IMR-90 (cell line): ENCODE measurements at regions of chr2 and their contacts with region 1.

Region 1: DNA sequence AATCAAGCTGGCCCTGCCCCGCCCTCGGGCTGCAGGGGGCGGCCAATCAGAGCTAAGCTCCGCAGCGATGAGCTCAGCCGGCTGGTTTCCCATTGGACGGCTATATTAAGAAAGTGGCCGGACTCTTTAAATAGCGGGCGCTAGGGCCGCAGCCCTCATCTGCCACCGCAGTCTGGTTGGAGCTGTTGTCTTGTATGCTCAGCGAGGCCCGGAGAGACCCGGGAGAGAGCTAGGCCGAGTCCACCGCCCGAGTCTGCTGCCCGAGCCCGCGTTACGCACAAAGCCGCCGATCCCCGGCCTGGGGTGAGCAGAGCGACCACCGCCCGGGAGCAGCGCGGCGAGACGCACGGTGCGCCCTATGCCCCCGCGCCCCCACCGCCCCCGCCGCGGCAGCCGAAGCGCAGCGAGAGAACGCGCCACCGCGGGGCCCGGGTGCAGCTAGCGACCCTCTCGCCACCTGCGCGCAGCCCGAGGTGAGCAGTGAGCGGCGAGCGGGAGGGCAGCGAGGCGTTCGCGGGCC is at the start of gene RHOB:
- DNase-seq: peak; percentile 98
- ATAC-seq: peak; percentile 88
- H3K4me3 ChIP-seq: peak within 1 kb of the TSS; percentile 86
- H3K27ac ChIP-seq: peak within 1 kb of the TSS; percentile 88
- H3K4me1 ChIP-seq: peaks cover 14% of the 10 kb centered on the region
- H3K27me3 ChIP-seq: no peaks in the 10 kb centered on the region
- CTCF ChIP-seq: no peak
- POLR2A ChIP-seq: peak; percentile 100
- RAD21 ChIP-seq: no peak
- total RNA-seq, gene RHOB: 112 and 151 TPM in 2 replicates

Region 2: DNA sequence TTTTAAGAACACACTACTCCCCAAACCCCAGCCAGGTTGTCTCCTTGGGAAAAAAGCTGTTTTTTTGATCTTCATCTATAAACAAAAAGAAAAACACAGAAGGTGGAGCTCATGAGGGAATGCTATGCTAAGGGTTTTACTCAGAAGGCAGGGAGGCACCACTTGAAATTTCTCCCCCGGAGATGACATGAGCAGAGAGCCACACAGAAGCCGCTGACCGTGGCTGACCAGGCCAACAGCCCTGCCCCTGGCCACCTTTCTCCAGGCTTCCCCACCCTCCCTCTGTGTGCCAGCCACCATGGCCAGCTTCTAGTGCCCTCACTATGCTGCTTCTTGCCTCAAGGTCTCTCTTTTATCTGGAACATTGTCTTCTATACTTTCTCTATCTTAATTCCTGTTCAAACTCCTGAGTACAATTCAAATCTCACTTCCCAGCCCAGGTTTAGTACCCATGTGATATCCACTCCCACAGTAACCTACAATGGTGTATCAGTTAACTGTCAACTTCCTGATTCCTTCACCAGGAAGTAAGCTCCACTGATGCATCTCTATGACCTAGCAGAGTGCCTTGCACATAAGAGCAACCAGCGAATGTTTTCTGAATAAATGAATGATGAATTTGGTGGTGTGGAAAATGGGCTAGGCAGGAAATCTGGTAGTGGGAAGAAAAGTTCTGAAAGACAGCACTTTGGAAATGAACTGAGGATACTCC is 410.9 kb before region 1 on chr2:
- CTCF ChIA-PET with region 1: no interaction called
- POLR2A ChIA-PET with region 1: no interaction called
- dilution Hi-C with region 1: no loop called
- in situ Hi-C with region 1: no loop called
- intact Hi-C with region 1: no loop called
- DNase-seq: no peak
- ATAC-seq: no peak
- H3K4me3 ChIP-seq: no peak overlapping the region
- H3K27ac ChIP-seq: no peak overlapping the region
- H3K4me1 ChIP-seq: 0 out of 2 replicates have a peak, but pooled peaks cover 1% of the 10 kb centered on the region
- H3K27me3 ChIP-seq: no peaks in the 10 kb centered on the region
- CTCF ChIP-seq: no peak
- POLR2A ChIP-seq: no peak
- RAD21 ChIP-seq: no peak

Region 3: DNA sequence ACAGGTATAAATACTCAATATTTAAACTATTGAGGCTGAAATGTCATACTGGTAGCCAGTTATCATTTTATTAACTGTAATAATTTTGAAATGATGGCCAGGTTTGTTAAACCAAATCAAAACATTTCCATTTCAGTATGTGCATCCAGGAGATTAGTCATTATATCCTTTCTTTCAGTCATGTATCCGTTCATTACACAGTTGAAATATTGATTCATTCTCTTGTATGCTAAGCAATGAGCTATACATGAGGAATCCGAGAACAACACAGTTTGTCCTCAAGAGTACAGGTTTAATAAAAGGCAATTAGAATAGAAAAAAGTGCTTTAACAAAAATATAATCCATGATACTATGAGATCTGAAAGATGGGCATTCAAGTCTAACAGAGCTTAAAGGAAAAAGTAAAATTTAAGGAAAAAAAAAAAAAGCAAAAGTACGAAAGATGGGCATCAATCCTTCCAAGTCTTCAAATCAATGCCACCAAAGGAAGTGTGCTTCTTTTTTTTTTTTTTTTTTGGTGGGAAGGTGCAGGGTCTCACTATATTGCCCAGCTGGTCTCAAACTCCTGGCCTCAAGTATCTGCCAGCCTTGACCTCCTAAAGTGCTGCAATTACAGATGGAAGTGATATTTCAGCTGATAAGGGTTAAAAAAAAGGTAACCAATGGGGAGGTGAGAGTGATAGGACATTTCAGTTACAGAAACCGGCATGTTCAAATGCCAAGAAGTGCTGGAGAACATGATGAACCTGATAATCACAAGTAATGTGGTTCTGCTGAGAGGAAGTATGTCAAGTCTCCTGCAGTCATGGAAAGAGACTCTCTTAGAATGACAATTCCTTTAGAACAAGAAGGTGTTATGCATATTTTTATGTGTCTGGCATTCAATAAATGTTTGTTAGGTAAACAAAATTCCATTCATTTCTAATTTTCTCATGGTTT is 132.1 kb before region 1 on chr2:
- CTCF ChIA-PET with region 1: interaction called, 5 read pairs
- POLR2A ChIA-PET with region 1: interaction called, 10 read pairs
- dilution Hi-C with region 1: no loop called
- in situ Hi-C with region 1: no loop called
- intact Hi-C with region 1: no loop called
- DNase-seq: peak; percentile 51
- ATAC-seq: no peak
- H3K4me3 ChIP-seq: no peak overlapping the region
- H3K27ac ChIP-seq: no peak overlapping the region
- H3K4me1 ChIP-seq: peaks cover 2% of the 10 kb centered on the region; the same call in 1 of the 2 replicates
- H3K27me3 ChIP-seq: no peaks in the 10 kb centered on the region
- CTCF ChIP-seq: no peak
- POLR2A ChIP-seq: no peak
- RAD21 ChIP-seq: no peak

Region 4: GRCh38 chr2:20333738-20334137 is 113.2 kb before region 1 on chr2:
- CTCF ChIA-PET with region 1: no interaction called
- POLR2A ChIA-PET with region 1: no interaction called
- dilution Hi-C with region 1: no loop called
- in situ Hi-C with region 1: no loop called
- intact Hi-C with region 1: no loop called
- DNase-seq: no peak
- ATAC-seq: no peak
- H3K4me3 ChIP-seq: no peak overlapping the region
- H3K27ac ChIP-seq: no peak overlapping the region
- H3K4me1 ChIP-seq: peaks cover 2% of the 10 kb centered on the region; the same call in 1 of the 2 replicates
- H3K27me3 ChIP-seq: no peaks in the 10 kb centered on the region
- CTCF ChIP-seq: no peak
- POLR2A ChIP-seq: no peak
- RAD21 ChIP-seq: no peak

Region 5: GRCh38 chr2:20411361-20411894 is 35.5 kb before region 1 on chr2:
- CTCF ChIA-PET with region 1: interaction called, 13 read pairs
- POLR2A ChIA-PET with region 1: interaction called, 3 read pairs
- dilution Hi-C with region 1: no loop called
- in situ Hi-C with region 1: no loop called
- intact Hi-C with region 1: loop called (anchors 1 kb)
- DNase-seq: peak; percentile 77
- ATAC-seq: peak; percentile 100
- H3K4me3 ChIP-seq: no peak overlapping the region
- H3K27ac ChIP-seq: no peak overlapping the region
- H3K4me1 ChIP-seq: no peaks in the 10 kb centered on the region
- H3K27me3 ChIP-seq: no peaks in the 10 kb centered on the region; the same call in 1 of the 2 replicates
- CTCF ChIP-seq: peak; percentile 84
- POLR2A ChIP-seq: no peak
- RAD21 ChIP-seq: peak; percentile 85

Region 6: DNA sequence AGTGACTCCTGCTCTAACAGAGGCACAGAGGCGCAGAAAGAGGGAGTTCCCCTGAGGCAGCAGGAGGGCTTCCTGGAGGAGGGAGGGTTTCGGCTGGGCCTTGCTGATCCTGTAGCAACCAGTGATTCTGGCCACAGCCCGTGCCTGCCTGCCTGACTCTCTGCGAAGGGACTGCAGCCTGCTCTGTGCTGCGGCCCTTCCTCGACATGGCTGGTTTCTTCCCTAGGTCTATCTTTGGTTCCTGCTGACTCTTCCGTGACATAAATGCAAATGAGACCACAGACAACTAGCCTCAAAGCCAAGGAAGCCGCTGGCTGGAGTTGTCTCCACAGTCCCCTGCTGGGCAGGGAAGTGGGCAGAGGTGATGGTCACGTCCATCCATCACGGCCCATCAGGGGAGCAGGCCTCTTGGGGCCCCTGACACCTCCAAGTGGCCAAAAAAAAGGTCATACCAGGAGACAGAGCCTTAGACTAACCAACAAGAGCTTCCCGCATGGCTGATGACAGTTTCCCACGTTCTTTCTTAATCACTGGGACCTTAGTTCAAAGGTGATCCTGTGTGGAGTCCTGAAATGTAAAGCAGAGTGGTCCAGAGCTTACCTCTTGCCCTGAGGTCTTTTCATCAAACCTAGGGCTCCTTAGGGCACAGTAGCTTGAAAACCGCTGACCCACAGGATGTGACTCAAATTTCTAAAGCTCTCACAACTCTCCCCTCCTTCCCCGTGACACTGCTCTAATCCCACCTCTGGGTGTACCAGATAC is 148.6 kb after region 1 on chr2:
- CTCF ChIA-PET with region 1: no interaction called
- POLR2A ChIA-PET with region 1: interaction called, 10 read pairs
- dilution Hi-C with region 1: no loop called
- in situ Hi-C with region 1: no loop called
- intact Hi-C with region 1: loop called (anchors 2 kb)
- DNase-seq: peak; percentile 60
- ATAC-seq: no peak
- H3K4me3 ChIP-seq: no peak overlapping the region
- H3K27ac ChIP-seq: no peak overlapping the region; the same call in 1 of the 2 replicates
- H3K4me1 ChIP-seq: peaks cover 36% of the 10 kb centered on the region
- H3K27me3 ChIP-seq: no peaks in the 10 kb centered on the region
- CTCF ChIP-seq: no peak
- POLR2A ChIP-seq: no peak
- RAD21 ChIP-seq: no peak

Region 7: GRCh38 chr2:20617892-20618467 is 171.0 kb after region 1 on chr2:
- CTCF ChIA-PET with region 1: interaction called, 9 read pairs
- POLR2A ChIA-PET with region 1: interaction called, 14 read pairs
- dilution Hi-C with region 1: no loop called
- in situ Hi-C with region 1: no loop called
- intact Hi-C with region 1: loop called (anchors 1 kb)
- DNase-seq: peak; percentile 100
- ATAC-seq: peak; percentile 96
- H3K4me3 ChIP-seq: no peak overlapping the region
- H3K27ac ChIP-seq: peak overlapping the region; percentile 91
- H3K4me1 ChIP-seq: peaks cover 25% of the 10 kb centered on the region
- H3K27me3 ChIP-seq: no peaks in the 10 kb centered on the region
- CTCF ChIP-seq: peak; percentile 60
- POLR2A ChIP-seq: peak; percentile 74
- RAD21 ChIP-seq: peak; percentile 61

Region 8: DNA sequence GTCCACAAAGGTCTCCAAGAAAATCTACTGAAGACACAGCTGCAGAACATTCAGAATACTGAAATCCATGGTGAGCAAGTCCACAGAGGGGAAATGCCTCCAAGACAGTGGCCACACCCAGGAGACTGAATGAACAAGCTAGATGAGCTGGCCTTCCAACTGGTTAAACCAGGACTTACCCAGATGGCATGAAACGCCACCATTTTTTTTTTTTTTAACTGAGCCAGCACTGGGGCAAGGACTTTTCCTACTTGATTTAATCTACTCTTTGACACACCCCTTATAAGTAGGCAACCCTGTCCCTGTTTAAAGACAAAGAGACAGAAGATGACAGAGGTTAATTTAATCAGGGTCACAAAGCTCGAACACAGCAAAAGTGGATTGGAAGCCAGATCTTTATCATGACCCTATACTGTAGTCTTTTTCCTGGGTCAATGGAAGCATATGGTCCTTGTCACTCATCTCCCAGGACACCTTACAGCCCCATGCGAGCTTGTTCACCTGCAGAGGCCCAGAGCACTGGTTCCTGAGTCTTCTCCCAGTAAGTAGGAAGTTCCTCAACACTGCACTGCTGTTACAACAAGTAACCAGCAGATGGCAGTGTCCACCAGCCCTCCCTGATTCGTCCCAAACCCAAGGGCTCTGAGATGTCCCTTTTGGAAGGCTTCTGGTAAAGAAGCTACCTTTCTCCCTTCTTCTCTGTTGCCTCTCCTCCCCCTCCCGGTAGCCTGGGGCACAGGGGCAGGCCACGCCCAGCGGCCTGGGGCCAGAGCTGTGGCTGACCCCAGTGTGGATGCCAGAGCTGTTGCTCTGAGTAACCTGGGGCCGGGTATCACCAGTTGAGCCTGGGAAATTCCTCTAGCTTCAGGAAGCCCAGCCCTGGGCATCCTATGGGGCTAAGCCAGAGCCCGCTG is 214.3 kb after region 1 on chr2:
- CTCF ChIA-PET with region 1: no interaction called
- POLR2A ChIA-PET with region 1: interaction called, 14 read pairs
- dilution Hi-C with region 1: no loop called
- in situ Hi-C with region 1: no loop called
- intact Hi-C with region 1: no loop called
- DNase-seq: peak; percentile 75
- ATAC-seq: peak; percentile 92
- H3K4me3 ChIP-seq: no peak overlapping the region
- H3K27ac ChIP-seq: no peak overlapping the region
- H3K4me1 ChIP-seq: peaks cover 5% of the 10 kb centered on the region; the same call in 1 of the 2 replicates
- H3K27me3 ChIP-seq: peaks cover 73% of the 10 kb centered on the region
- CTCF ChIP-seq: peak; percentile 96
- POLR2A ChIP-seq: peak; percentile 50; the same call in 1 of the 2 replicates
- RAD21 ChIP-seq: peak; percentile 99

Region 9: GRCh38 chr2:20728114-20728758 is 281.3 kb after region 1 on chr2:
- CTCF ChIA-PET with region 1: no interaction called
- POLR2A ChIA-PET with region 1: no interaction called
- dilution Hi-C with region 1: no loop called
- in situ Hi-C with region 1: no loop called
- intact Hi-C with region 1: no loop called
- DNase-seq: peak; percentile 33
- ATAC-seq: peak; percentile 73
- H3K4me3 ChIP-seq: no peak overlapping the region
- H3K27ac ChIP-seq: no peak overlapping the region
- H3K4me1 ChIP-seq: peaks cover 6% of the 10 kb centered on the region; the same call in 1 of the 2 replicates
- H3K27me3 ChIP-seq: no peaks in the 10 kb centered on the region
- CTCF ChIP-seq: no peak
- POLR2A ChIP-seq: no peak
- RAD21 ChIP-seq: no peak

Region 10: GRCh38 chr2:20838016-20838415 is 391.0 kb after region 1 on chr2:
- CTCF ChIA-PET with region 1: no interaction called
- POLR2A ChIA-PET with region 1: no interaction called
- dilution Hi-C with region 1: no loop called
- in situ Hi-C with region 1: no loop called
- intact Hi-C with region 1: no loop called
- DNase-seq: no peak
- ATAC-seq: no peak
- H3K4me3 ChIP-seq: no peak overlapping the region
- H3K27ac ChIP-seq: no peak overlapping the region
- H3K4me1 ChIP-seq: no peaks in the 10 kb centered on the region
- H3K27me3 ChIP-seq: no peaks in the 10 kb centered on the region; the same call in 1 of the 2 replicates
- CTCF ChIP-seq: no peak
- POLR2A ChIP-seq: no peak
- RAD21 ChIP-seq: no peak